Psoas muscle (tissue), 8 donors: ENCODE measurements at regions of chr14 and their contacts with region 1.

Region 1: GRCh38 chr14:22653012-22653621 is 9.0 kb upstream of the OR6J1 start:
- DNase-seq: peak; percentile 29 to 57
- ATAC-seq: peak; percentile 55 to 85 (median 82)
- H3K4me3 ChIP-seq: no peak overlapping the region
- H3K27ac ChIP-seq: no peak overlapping the region
- H3K4me1 ChIP-seq: peaks cover 16% of the 10 kb centered on the region
- H3K27me3 ChIP-seq: no peaks in the 10 kb centered on the region
- CTCF ChIP-seq: peak; percentile 77

Region 2: GRCh38 chr14:22386924-22387775 is 266.0 kb before region 1 on chr14:
- intact Hi-C with region 1: loop called in 1 of 2 experiments (anchors 5 kb)
- DNase-seq: peak in 1 of 2 donors; percentile 38
- ATAC-seq: peak in 3 of 4 donors; percentile 55 to 71 (median 65)
- H3K4me3 ChIP-seq: no peak overlapping the region
- H3K27ac ChIP-seq: no peak overlapping the region
- H3K4me1 ChIP-seq: no peaks in the 10 kb centered on the region
- H3K27me3 ChIP-seq: peaks cover 0 to 13% (median 0%) of the 10 kb centered on the region in 3 donors
- CTCF ChIP-seq: peak; percentile 85

Region 3: GRCh38 chr14:22570132-22570949 is 82.8 kb before region 1 on chr14:
- intact Hi-C with region 1: loop called (anchors 2 to 5 kb)
- DNase-seq: no peak
- ATAC-seq: peak; percentile 61 to 82 (median 71)
- H3K4me3 ChIP-seq: no peak overlapping the region
- H3K27ac ChIP-seq: peak overlapping the region; percentile 5
- H3K4me1 ChIP-seq: peaks cover 34% of the 10 kb centered on the region
- H3K27me3 ChIP-seq: no peaks in the 10 kb centered on the region
- CTCF ChIP-seq: peak; percentile 87

Region 4: DNA sequence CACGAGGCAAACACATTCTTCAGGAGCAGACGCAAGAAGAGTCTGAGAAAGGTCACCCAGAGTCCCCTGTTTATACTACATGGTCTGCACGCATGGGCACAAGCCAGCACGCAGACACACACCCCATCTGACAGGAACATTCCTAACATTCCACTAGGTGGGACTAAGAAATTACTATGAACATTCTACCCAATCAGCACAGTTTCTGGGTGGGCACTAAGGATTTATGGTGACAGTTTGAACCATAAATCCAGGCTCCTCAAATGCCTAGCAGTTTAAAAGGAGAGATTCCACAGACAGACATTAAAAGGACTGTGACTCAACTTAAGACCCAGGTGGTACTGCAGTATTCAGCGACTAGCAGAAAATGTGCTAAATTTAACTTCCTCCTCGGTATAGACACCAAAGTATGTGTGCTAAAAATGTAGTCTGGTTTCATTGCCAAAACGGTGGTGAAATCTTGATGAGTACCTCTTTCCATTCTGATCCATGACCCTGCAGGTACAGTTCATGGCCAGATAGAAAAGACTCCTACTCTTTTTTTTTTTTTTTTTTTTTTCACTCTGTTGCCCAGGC is 38.8 kb before region 1 on chr14:
- intact Hi-C with region 1: loop called in 1 of 2 experiments (anchors 5 kb)
- DNase-seq: peak in 1 of 2 donors; percentile 21
- ATAC-seq: peak; percentile 88 to 96 (median 92)
- H3K4me3 ChIP-seq: no peak overlapping the region
- H3K27ac ChIP-seq: peak overlapping the region; percentile 56
- H3K4me1 ChIP-seq: peaks cover 17% of the 10 kb centered on the region
- H3K27me3 ChIP-seq: no peaks in the 10 kb centered on the region
- CTCF ChIP-seq: no peak

Region 5: GRCh38 chr14:22822571-22823098 is 169.5 kb after region 1 on chr14:
- intact Hi-C with region 1: loop called in 1 of 2 experiments (anchors 5 kb)
- DNase-seq: peak; percentile 81 to 85
- ATAC-seq: peak; percentile 83 to 95 (median 86)
- H3K4me3 ChIP-seq: peak overlapping the region; percentile 41
- H3K27ac ChIP-seq: no peak overlapping the region
- H3K4me1 ChIP-seq: no peaks in the 10 kb centered on the region
- H3K27me3 ChIP-seq: peaks cover 0 to 2% (median 0%) of the 10 kb centered on the region in 3 donors
- CTCF ChIP-seq: peak; percentile 83

Region 6: GRCh38 chr14:22852940-22853767 is 200.0 kb after region 1 on chr14:
- intact Hi-C with region 1: loop called in 1 of 2 experiments (anchors 10 kb)
- DNase-seq: peak; percentile 88 to 93
- ATAC-seq: peak; percentile 70 to 81 (median 73)
- H3K4me3 ChIP-seq: peak overlapping the region; percentile 68
- H3K27ac ChIP-seq: no peak overlapping the region
- H3K4me1 ChIP-seq: peaks cover 47% of the 10 kb centered on the region
- H3K27me3 ChIP-seq: no peaks in the 10 kb centered on the region
- CTCF ChIP-seq: peak; percentile 89